Cardiac septum (tissue), 1 donor: ENCODE measurements at regions of chr18 and their contacts with region 1.

Region 1: GRCh38 chr18:58625839-58626238 is 3.1 kb downstream of the ALPK2 start:
- DNase-seq: no peak

Region 2: DNA sequence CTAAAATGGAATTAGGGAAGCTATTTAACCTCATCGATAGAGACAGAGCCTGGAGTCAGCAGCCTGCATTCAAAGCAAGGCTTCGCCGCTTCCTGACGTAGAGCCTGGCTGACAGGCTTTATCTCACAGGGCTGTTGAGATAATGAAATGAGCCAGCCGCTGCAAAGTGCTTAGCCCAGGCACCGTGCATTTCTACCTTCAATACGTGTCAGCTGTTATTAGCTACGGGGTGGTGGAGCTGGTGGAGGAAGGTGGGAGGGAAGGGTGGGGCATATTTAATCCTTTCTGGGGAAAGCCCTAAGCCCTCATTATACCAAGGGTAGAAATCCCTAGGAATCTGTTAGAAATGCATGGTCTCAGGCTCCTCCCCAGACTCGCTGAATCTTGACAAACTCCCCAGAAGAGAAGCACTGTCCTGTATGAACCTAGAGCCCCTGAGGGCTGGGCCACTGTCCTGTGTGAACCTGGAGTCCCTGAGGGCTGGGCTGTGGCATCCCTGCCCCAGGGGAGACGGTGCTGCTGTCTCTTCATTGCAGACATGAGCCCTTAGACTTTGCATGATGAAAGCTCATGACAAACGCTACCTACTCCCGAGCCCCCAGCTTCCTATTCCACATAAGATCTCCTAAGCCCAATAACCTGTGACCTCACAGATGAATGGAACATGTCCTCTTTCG is 69.4 kb before region 1 on chr18:
- intact Hi-C with region 1: loop called (anchors 5 kb)
- DNase-seq: peak; percentile 83

Region 3: DNA sequence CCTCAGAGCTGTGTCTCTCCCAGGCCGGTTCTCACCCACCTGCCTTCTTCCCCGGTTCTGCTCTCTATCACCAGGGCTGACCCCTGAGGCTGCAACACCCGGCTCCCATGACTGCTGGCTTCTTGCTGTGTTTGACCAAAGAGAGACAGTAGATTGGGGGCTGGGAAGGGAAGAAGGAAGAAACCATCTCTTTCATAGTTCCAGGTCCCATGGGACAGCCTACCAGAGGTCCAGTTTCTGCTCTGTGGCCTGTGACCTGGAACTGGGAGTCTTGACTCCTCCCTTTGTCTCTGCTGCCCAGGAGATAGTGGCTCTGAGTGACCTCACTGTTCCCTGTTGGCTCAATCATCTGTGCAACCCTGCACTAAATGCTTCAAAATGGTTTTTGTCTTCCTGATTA is 35.0 kb before region 1 on chr18:
- intact Hi-C with region 1: loop called (anchors 5 kb)
- DNase-seq: no peak

Region 4: DNA sequence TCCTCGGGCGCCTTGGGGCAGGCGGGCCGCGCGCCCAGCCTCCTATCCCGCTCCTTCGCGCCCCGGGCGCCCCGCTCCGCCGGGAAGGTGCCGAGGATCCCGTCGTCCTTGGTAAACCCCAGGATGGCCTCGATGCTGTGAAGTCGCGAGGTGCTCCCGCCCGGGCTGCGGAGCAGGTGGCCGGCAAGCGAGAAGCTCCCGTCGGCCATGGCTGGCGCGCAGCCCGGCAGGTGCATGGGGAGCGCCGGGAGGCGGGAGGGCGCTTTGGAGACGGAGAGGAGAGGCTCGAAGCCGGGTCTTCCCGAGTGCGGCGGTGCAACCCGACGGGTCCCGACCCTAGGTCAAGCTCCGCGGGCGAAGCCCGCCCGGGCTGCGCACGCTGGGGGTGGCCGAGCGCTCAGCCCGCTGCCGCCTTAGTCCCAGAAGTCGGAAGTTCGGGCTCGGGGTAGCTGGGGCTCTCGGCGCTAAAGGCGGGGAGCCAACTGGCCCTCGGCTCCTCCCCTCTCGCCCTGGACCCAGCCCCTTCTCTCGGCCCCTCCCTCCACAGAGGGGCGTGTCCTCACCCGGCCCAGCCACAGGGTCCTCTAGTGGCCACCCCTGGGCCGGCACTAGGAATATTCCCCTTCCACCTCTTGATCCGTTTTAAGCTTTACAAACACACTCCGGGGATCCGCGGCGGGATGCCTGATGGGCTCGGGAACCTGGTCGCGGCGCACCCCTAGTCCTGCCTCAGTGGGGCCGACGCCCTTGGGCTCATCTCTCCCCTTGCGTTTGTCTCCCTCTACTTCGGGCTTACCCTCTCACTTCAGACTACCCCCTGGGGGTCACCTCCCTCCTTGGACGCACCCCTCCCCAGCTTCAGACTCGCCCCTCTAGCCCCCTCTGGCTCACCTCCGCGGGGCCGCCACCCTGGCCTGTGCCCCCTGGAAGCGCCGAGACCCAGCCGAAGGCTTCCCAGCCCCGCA is 647.4 kb after region 1 on chr18 and contains the start of gene RAX:
- intact Hi-C with region 1: no loop called
- DNase-seq: no peak
- total RNA-seq, gene RAX: not detected